Activated B cell treated with CpG ODN at 0.5 μM for 24 hours (primary cell): ENCODE measurements at regions of chr9 and their contacts with region 1.

Region 1: DNA sequence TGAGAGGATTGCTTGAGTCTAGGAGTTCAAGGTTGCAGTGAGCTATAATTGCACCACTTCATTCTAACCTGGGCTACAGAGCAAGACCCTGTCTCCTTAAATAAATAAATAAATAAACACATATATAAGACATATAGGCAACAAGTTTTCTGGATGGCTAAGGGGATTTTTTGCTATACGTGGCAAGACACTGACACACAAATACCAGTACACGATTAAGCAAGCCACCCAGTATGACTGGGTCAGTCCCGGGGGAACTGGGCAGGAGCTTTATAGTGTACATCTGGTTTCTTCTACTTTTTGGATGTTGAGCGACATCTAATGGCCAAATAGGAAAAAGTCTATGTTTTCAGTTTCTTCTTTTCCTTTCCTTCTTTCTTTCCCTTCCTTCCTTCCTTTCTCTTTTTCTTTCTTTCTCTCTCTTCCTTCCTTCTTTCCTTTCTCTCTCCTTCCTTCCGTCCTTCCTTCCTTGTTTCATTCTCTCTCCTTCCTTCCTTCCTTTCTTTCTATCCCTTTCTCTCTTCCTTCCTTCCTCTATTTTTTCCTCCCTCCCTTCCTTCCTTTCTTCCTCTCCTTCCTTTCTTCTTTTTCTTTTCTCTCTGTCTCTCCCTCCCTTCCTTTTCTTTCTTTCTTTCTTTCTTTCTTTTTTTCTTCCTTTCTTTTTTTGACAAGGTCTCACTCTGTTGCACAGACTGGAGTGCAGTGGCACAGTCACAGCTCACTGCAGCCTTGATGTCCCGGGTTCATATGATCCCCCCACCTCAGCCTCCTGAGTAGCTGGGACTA is 47.0 kb upstream of the PLIN2 start:
- DNase-seq: peak; percentile 40
- ATAC-seq: peak; percentile 100
- H3K4me3 Mint-ChIP-seq: no peak overlapping the region
- H3K27ac Mint-ChIP-seq: no peak overlapping the region
- H3K4me1 Mint-ChIP-seq: peaks cover 6% of the 10 kb centered on the region
- H3K27me3 Mint-ChIP-seq: peaks cover 3% of the 10 kb centered on the region
- CTCF ChIP-seq: no peak

Region 2: GRCh38 chr9:18255158-18255629 is 919.1 kb before region 1 on chr9:
- CTCF ChIA-PET with region 1: interaction called, 19 read pairs
- POLR2A ChIA-PET with region 1: no interaction called
- intact Hi-C with region 1: no loop called
- DNase-seq: peak; percentile 29
- ATAC-seq: peak; percentile 72
- H3K4me3 Mint-ChIP-seq: no peak overlapping the region
- H3K27ac Mint-ChIP-seq: no peak overlapping the region
- H3K4me1 Mint-ChIP-seq: no peaks in the 10 kb centered on the region
- H3K27me3 Mint-ChIP-seq: peaks cover 4% of the 10 kb centered on the region
- CTCF ChIP-seq: peak; percentile 93

Region 3: DNA sequence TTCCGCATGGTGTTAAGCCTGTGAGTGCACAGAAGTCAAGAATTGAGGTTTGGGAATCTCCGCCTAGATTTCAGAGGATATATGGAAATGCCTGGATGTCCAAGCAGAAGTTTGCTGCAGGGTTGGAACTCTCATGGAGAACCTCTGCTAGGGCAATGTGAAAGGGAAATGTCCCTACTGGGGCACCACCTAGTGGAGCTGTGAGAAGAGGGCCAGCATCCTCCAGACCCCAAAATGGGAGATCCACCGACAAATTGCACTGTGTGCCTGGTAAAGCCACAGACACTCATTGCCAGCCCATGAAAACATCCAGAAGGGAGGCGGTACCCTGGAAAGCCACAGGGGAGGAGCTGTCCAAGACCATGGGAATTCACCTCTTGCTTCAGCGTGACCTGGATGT is 137.7 kb before region 1 on chr9:
- CTCF ChIA-PET with region 1: no interaction called
- POLR2A ChIA-PET with region 1: no interaction called
- intact Hi-C with region 1: loop called (anchors 1 kb)
- DNase-seq: no peak
- ATAC-seq: no peak
- H3K4me3 Mint-ChIP-seq: no peak overlapping the region
- H3K27ac Mint-ChIP-seq: no peak overlapping the region
- H3K4me1 Mint-ChIP-seq: no peaks in the 10 kb centered on the region
- H3K27me3 Mint-ChIP-seq: peaks cover 6% of the 10 kb centered on the region
- CTCF ChIP-seq: no peak

Region 4: DNA sequence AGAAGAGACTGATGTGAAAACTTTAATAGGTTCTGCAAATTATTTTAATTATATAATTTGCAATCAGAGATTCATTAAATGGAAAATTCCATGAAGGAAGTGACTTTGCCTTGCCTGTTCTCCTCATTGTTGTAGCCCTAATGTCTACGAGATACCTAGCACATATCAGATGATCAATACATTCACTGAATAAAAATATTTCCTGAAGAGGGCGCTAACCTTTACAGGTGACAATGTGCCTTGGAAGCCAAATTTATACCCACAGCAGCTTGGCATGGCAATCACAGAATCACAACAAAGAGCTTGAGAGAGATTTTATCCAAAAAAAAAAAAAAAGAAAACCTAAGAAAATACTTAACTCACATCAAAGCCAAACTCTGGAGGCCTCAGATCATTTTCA is 89.0 kb before region 1 on chr9:
- CTCF ChIA-PET with region 1: interaction called, 29 read pairs
- POLR2A ChIA-PET with region 1: no interaction called
- intact Hi-C with region 1: loop called (anchors 1 kb)
- DNase-seq: no peak
- ATAC-seq: peak; percentile 45
- H3K4me3 Mint-ChIP-seq: no peak overlapping the region
- H3K27ac Mint-ChIP-seq: no peak overlapping the region
- H3K4me1 Mint-ChIP-seq: no peaks in the 10 kb centered on the region
- H3K27me3 Mint-ChIP-seq: no peaks in the 10 kb centered on the region
- CTCF ChIP-seq: no peak

Region 5: DNA sequence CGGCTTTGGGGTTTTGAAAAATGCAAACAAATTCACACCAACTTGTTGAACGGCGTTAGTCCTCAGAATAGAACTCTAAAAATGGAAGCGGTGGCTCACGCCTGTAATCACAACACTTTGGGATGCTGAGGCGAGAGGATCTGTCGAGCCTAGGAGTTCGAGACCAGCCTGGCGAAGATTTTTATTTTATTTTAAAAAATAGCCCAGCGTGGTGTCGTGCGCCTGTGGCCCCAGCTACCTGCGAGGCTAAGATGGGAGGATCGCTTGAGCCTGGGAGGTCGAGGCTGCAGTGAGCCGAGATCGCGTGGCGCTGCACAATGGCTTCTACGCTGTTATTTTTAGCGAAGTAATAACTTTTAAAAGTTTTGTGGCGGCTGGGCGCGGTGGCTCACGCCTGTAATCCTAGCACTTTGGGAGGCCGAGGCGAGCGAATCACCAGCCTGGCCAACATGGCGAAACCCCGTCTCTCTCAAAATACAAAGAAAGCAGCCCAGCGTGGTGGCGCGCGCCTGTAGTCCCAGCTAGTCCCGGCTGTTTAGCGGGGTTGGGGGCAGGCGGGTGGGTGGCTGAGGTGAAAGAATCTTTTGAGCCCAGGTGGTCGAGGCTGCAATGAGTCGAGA is 46.3 kb before region 1 on chr9:
- CTCF ChIA-PET with region 1: no interaction called
- POLR2A ChIA-PET with region 1: no interaction called
- intact Hi-C with region 1: loop called (anchors 1 kb)
- DNase-seq: peak; percentile 18
- ATAC-seq: peak; percentile 12
- H3K4me3 Mint-ChIP-seq: peak overlapping the region; percentile 89
- H3K27ac Mint-ChIP-seq: peak overlapping the region; percentile 79
- H3K4me1 Mint-ChIP-seq: peaks cover 29% of the 10 kb centered on the region
- H3K27me3 Mint-ChIP-seq: no peaks in the 10 kb centered on the region
- CTCF ChIP-seq: no peak

Region 6: GRCh38 chr9:19456996-19457692 is 282.8 kb after region 1 on chr9:
- CTCF ChIA-PET with region 1: interaction called, 15 read pairs
- POLR2A ChIA-PET with region 1: interaction called, 4 read pairs
- intact Hi-C with region 1: loop called (anchors 1 kb)
- DNase-seq: peak; percentile 32
- ATAC-seq: peak; percentile 97
- H3K4me3 Mint-ChIP-seq: no peak overlapping the region
- H3K27ac Mint-ChIP-seq: no peak overlapping the region
- H3K4me1 Mint-ChIP-seq: peaks cover 13% of the 10 kb centered on the region
- H3K27me3 Mint-ChIP-seq: no peaks in the 10 kb centered on the region
- CTCF ChIP-seq: peak; percentile 80